CD14-positive monocyte (primary cell): ENCODE measurements at regions of chr16 and their contacts with region 1.

Region 1: DNA sequence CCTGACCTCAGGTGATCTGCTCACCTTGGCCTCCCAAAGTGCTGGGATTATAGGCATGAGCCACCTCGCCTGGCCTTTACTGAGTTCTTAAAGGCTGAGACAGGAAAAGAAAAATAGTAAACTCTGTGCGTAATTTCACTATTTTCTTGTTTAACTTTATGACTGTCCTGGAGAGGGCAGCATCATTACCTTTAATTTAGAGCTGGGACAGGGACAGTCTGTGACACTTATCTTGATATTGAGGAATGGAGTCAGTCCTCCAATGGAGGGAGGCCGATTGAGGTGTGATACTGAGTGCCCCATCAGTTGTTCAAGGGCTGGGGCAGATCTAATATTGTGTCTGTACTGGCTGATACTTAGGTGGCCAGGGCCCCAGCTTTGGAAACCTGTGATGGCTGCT is 21.5 kb upstream of the SPN start:
- DNase-seq: peak; percentile 21 to 39 (median 38)
- H3K4me3 ChIP-seq: no peak overlapping the region
- H3K4me3 Mint-ChIP-seq: peak overlapping the region in 1 of 2 donors; percentile 41
- H3K27ac ChIP-seq: no peak overlapping the region
- H3K27ac Mint-ChIP-seq: peak overlapping the region in 1 of 7 donors; percentile 48
- H3K4me1 ChIP-seq: peaks cover 31 to 32% of the 10 kb centered on the region in 2 donors
- H3K4me1 Mint-ChIP-seq: peaks cover 36% of the 10 kb centered on the region
- H3K27me3 ChIP-seq: no peaks in the 10 kb centered on the region
- H3K27me3 Mint-ChIP-seq: peaks cover 0 to 2% (median 0%) of the 10 kb centered on the region in 3 donors
- CTCF ChIP-seq: peak; percentile 42

Region 2: GRCh38 chr16:29675811-29676643 is 34.5 kb after region 1 on chr16:
- intact Hi-C with region 1: no loop called
- DNase-seq: peak; percentile 51 to 72 (median 65)
- H3K4me3 ChIP-seq: no peak overlapping the region
- H3K4me3 Mint-ChIP-seq: no peak overlapping the region
- H3K27ac ChIP-seq: no peak overlapping the region
- H3K27ac Mint-ChIP-seq: peak overlapping the region; percentile 42 to 85 (median 54)
- H3K4me1 ChIP-seq: peaks cover 49 to 56% of the 10 kb centered on the region in 2 donors
- H3K4me1 Mint-ChIP-seq: peaks cover 53% of the 10 kb centered on the region
- H3K27me3 ChIP-seq: no peaks in the 10 kb centered on the region
- H3K27me3 Mint-ChIP-seq: peaks cover 2% of the 10 kb centered on the region in 3 donors
- CTCF ChIP-seq: no peak

Region 3: DNA sequence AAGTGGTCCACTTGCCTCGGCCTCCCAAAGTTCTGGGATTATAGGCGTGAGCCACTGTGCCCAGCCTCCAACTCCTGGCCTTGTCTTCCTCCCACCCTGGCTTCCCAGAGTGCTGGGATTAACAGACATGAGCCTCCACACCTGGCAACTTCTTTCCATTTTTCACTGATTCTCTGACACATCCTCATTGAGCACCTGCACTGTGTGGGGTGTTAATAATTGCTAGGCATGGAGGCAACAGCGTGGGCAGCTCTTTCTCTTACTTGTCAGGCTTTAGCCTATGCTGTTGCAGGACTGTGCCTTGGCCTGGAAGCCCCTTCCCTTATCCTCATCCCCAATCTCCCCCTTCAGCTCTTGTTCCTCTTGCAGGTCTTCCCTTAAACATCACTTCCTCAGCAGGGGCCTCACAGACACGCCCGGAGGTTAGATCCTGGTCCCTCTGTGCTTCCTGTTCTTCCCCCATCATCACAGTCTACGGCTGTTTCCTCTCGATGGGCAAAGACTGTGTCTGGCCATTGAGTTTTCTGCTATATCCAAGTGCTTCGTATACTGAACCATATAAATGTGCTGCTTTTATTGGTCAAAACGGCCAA is 45.3 kb after region 1 on chr16:
- intact Hi-C with region 1: loop called in 1 of 2 experiments (anchors 5 kb)
- DNase-seq: peak in 2 of 3 donors; percentile 47 to 59
- H3K4me3 ChIP-seq: no peak overlapping the region
- H3K4me3 Mint-ChIP-seq: peak overlapping the region in 1 of 2 donors; percentile 57
- H3K27ac ChIP-seq: no peak overlapping the region
- H3K27ac Mint-ChIP-seq: peak overlapping the region in 2 of 7 donors; percentile 0 to 77
- H3K4me1 ChIP-seq: peaks cover 17 to 18% of the 10 kb centered on the region in 2 donors
- H3K4me1 Mint-ChIP-seq: peaks cover 21% of the 10 kb centered on the region
- H3K27me3 ChIP-seq: no peaks in the 10 kb centered on the region
- H3K27me3 Mint-ChIP-seq: peaks cover 0 to 8% (median 4%) of the 10 kb centered on the region in 3 donors
- CTCF ChIP-seq: no peak

Region 4: DNA sequence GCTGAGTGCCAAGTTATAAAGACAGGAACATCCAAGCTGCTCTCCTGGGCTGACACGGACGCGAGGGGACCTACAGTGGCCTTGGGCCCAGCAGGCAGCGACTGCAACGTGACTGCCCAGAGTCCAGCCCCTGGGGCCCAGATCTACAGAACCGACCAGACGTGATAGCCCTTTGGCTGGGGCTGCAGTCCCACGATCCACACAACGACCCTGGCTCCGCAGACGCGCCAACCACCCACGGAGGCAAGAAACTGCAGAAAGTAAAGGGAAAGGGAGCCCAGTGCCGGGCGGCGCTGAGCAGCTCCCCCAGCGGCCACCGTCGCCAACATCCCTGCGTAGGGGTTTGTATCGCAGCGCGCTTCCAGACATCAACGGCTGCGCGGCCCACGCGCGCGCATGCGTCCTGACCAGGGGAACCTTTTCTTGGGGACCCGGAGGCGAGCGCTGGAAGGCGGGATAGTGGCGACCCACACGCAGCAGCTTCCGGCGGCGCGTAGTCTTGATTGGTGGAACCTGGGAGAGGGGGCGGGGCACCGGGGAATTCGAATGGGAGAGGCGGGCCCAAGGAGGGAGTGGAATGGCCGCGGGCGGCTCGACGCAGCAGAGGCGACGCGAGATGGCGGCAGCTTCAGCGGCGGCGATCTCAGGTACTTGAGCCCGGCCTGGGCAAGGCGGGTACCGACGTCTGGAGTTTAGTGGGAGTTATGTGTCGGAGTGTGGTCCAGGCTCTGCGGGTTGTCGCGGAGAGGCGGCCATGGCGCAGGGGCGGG is 148.8 kb after region 1 on chr16 and contains the start of gene KIF22:
- intact Hi-C with region 1: no loop called
- DNase-seq: peak; percentile 99 to 100 (median 99)
- H3K4me3 ChIP-seq: peak within 1 kb of the TSS; percentile 67 to 97 (median 97)
- H3K4me3 Mint-ChIP-seq: peak within 1 kb of the TSS; percentile 97 to 98
- H3K27ac ChIP-seq: peak within 1 kb of the TSS; percentile 78 to 83
- H3K27ac Mint-ChIP-seq: peak within 1 kb of the TSS; percentile 89 to 95 (median 94)
- H3K4me1 ChIP-seq: peaks cover 26 to 36% of the 10 kb centered on the region in 2 donors
- H3K4me1 Mint-ChIP-seq: peaks cover 43% of the 10 kb centered on the region
- H3K27me3 ChIP-seq: no peaks in the 10 kb centered on the region
- H3K27me3 Mint-ChIP-seq: peaks cover 0 to 1% (median 0%) of the 10 kb centered on the region in 3 donors
- CTCF ChIP-seq: peak; percentile 77
- polyA plus RNA-seq, gene KIF22: 22.0 to 46.2 (median 28.9) TPM